Esophagus squamous epithelium (tissue), 5 donors: ENCODE measurements at regions of chrX and their contacts with region 1.

Region 1: GRCh38 chrX:47854474-47854873 is 17.8 kb downstream of the ZNF81 start:
- DNase-seq: no peak
- H3K4me3 ChIP-seq: no peak overlapping the region
- H3K27ac ChIP-seq: no peak overlapping the region
- H3K4me1 ChIP-seq: no peaks in the 10 kb centered on the region
- H3K27me3 ChIP-seq: no peaks in the 10 kb centered on the region
- CTCF ChIP-seq: peak in 5 of 6 experiments; percentile 12 to 25 (median 20)
- POLR2A ChIP-seq: no peak

Region 2: GRCh38 chrX:48021026-48021900 is 166.8 kb after region 1 on chrX:
- intact Hi-C with region 1: loop called (anchors 10 kb)
- DNase-seq: no peak
- H3K4me3 ChIP-seq: peak overlapping the region; percentile 41 to 71 (median 56)
- H3K27ac ChIP-seq: peak overlapping the region; percentile 84 to 93 (median 88)
- H3K4me1 ChIP-seq: peaks cover 0 to 7% (median 0%) of the 10 kb centered on the region in 3 donors
- H3K27me3 ChIP-seq: no peaks in the 10 kb centered on the region
- CTCF ChIP-seq: no peak
- POLR2A ChIP-seq: no peak